Pancreas (tissue), 10 donors: ENCODE measurements at regions of chr2 and their contacts with region 1.

Region 1: GRCh38 chr2:238426568-238427434 is at the start of gene ASB1:
- DNase-seq: peak; percentile 52 to 90 (median 72)
- ATAC-seq: peak; percentile 87 to 93 (median 92)
- H3K4me3 ChIP-seq: peak within 1 kb of the TSS; percentile 73 to 98 (median 91)
- H3K27ac ChIP-seq: peak within 1 kb of the TSS; percentile 77 to 87 (median 83)
- H3K4me1 ChIP-seq: peaks cover 8 to 16% (median 10%) of the 10 kb centered on the region in 3 donors
- H3K27me3 ChIP-seq: no peaks in the 10 kb centered on the region
- CTCF ChIP-seq: no peak
- total RNA-seq, gene ASB1: 11.3 to 15.3 (median 12.9) TPM

Region 2: DNA sequence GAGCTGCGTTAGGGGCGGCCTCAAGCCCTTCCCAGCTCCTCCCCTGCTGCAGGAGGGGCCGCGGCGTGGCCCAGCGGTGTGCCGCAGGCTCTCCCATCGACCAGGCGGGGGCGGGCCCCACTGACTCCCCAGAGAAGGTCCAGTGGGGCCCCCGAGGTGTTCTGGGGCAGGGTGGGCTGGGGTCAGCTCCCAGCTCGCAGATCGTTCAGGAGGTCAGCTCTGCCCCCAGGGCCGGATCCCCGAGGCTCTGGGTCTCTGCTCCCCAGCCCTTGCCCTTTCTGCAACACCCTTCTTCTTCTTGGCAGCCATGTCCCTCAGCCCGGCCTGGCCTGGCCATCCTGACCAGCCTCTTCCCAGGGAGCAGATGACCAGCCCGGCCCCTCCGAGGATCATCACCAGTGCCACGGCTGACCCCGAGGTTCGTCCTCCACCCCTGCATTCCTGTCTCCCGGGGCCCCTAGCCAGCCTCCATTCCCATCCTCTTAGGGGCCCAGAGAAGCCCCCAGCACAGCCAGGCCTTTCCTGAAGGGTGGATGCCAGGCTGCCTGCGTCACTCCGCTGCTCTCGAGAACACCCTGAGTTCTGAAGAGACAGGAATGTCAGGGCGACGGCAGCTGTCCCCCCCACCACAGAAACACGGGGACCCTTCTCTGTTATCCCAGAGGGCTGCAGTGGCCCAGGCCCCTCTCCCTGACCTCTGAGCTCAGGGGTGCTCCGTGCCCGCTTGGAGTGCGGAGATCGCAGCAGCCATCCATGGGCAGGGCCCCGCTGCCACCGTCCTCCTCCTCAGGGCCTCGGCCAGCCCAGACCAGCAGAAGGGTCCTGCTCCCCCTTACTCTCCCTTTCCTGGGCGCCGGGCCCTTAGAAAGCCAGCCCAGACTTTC is 299.2 kb before region 1 on chr2:
- intact Hi-C with region 1: no loop called
- DNase-seq: peak in 2 of 6 donors; percentile 15 to 69
- ATAC-seq: peak in 3 of 4 donors; percentile 31 to 66 (median 62)
- H3K4me3 ChIP-seq: no peak overlapping the region
- H3K27ac ChIP-seq: no peak overlapping the region
- H3K4me1 ChIP-seq: no peaks in the 10 kb centered on the region
- H3K27me3 ChIP-seq: no peaks in the 10 kb centered on the region
- CTCF ChIP-seq: no peak

Region 3: GRCh38 chr2:238370823-238371372 is 55.9 kb before region 1 on chr2:
- intact Hi-C with region 1: loop called in 1 of 3 experiments (anchors 10 kb)
- DNase-seq: peak in 4 of 6 donors; percentile 45 to 65 (median 46)
- ATAC-seq: peak; percentile 80 to 99 (median 98)
- H3K4me3 ChIP-seq: no peak overlapping the region
- H3K27ac ChIP-seq: no peak overlapping the region
- H3K4me1 ChIP-seq: peaks cover 0 to 3% (median 0%) of the 10 kb centered on the region in 3 donors
- H3K27me3 ChIP-seq: no peaks in the 10 kb centered on the region
- CTCF ChIP-seq: peak; percentile 28 to 58 (median 52)

Region 4: DNA sequence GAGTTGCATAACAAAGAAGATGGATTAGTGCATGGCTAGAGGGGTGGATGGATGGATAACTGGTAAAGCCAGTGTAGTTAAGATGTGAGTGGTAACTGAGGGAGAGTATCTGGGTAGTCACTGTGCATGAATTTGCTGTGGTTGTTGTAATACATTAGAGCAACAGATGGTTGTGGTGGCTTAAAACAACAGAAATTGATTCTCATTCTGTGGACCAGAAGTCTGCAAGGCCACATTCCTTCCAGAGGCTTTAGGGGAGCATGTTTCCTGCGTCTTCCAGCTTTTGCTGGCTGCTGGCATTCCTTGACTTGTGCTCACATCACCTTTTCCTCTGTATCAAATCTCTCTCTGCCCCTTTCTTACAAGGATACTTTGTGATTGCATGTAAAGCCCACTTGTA is 155.4 kb after region 1 on chr2:
- intact Hi-C with region 1: no loop called
- DNase-seq: no peak
- ATAC-seq: no peak
- H3K4me3 ChIP-seq: no peak overlapping the region
- H3K27ac ChIP-seq: no peak overlapping the region
- H3K4me1 ChIP-seq: no peaks in the 10 kb centered on the region
- H3K27me3 ChIP-seq: no peaks in the 10 kb centered on the region
- CTCF ChIP-seq: no peak